Activated CD8-positive, alpha-beta T cell treated with anti-CD3 and anti-CD28 coated beads for 36 hours (primary cell): ENCODE measurements at regions of chr3 and their contacts with region 1.

Region 1: GRCh38 chr3:141370065-141370533 is 1.8 kb downstream of the ZBTB38 start:
- DNase-seq: peak; percentile 73
- ATAC-seq: peak; percentile 94
- H3K4me3 Mint-ChIP-seq: no peak overlapping the region
- H3K27ac Mint-ChIP-seq: peak overlapping the region; percentile 56
- H3K4me1 Mint-ChIP-seq: peaks cover 53% of the 10 kb centered on the region
- H3K27me3 Mint-ChIP-seq: no peaks in the 10 kb centered on the region
- CTCF ChIP-seq: peak; percentile 24

Region 2: GRCh38 chr3:141336672-141337522 is 33.2 kb before region 1 on chr3:
- CTCF ChIA-PET with region 1: no interaction called
- POLR2A ChIA-PET with region 1: no interaction called
- intact Hi-C with region 1: no loop called
- DNase-seq: no peak
- ATAC-seq: no peak
- H3K4me3 Mint-ChIP-seq: no peak overlapping the region
- H3K27ac Mint-ChIP-seq: no peak overlapping the region
- H3K4me1 Mint-ChIP-seq: no peaks in the 10 kb centered on the region
- H3K27me3 Mint-ChIP-seq: no peaks in the 10 kb centered on the region
- CTCF ChIP-seq: no peak

Region 3: DNA sequence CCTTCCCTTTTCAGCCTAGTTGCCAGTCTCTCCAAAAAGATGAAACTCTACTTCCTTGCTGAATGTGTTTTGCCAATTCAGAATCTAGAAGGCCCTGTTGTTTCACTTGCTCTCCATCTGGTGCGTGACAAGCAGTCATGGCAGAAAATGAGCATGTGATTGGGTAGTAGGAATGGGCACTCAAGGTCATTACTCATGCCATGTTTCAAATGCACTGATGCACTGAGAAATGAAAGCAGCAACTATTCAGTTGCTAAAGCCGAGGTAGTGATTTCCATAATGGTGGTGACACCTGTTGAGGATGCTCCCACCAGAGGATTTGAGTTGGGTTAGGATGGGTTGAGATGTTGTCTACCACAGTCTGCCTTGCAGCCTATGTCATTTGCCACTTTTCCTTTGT is 10.9 kb after region 1 on chr3:
- CTCF ChIA-PET with region 1: interaction called, 14 read pairs
- POLR2A ChIA-PET with region 1: interaction called, 3 read pairs
- intact Hi-C with region 1: no loop called
- DNase-seq: no peak
- ATAC-seq: no peak
- H3K4me3 Mint-ChIP-seq: no peak overlapping the region
- H3K27ac Mint-ChIP-seq: no peak overlapping the region
- H3K4me1 Mint-ChIP-seq: peaks cover 27% of the 10 kb centered on the region
- H3K27me3 Mint-ChIP-seq: no peaks in the 10 kb centered on the region
- CTCF ChIP-seq: no peak

Region 4: GRCh38 chr3:141402476-141403171 is 32.5 kb after region 1 on chr3:
- CTCF ChIA-PET with region 1: interaction called, 10 read pairs
- POLR2A ChIA-PET with region 1: interaction called, 3 read pairs
- intact Hi-C with region 1: no loop called
- DNase-seq: peak; percentile 59
- ATAC-seq: peak; percentile 68
- H3K4me3 Mint-ChIP-seq: peak overlapping the region; percentile 85
- H3K27ac Mint-ChIP-seq: peak overlapping the region; percentile 89
- H3K4me1 Mint-ChIP-seq: peaks cover 52% of the 10 kb centered on the region
- H3K27me3 Mint-ChIP-seq: no peaks in the 10 kb centered on the region
- CTCF ChIP-seq: no peak

Region 5: DNA sequence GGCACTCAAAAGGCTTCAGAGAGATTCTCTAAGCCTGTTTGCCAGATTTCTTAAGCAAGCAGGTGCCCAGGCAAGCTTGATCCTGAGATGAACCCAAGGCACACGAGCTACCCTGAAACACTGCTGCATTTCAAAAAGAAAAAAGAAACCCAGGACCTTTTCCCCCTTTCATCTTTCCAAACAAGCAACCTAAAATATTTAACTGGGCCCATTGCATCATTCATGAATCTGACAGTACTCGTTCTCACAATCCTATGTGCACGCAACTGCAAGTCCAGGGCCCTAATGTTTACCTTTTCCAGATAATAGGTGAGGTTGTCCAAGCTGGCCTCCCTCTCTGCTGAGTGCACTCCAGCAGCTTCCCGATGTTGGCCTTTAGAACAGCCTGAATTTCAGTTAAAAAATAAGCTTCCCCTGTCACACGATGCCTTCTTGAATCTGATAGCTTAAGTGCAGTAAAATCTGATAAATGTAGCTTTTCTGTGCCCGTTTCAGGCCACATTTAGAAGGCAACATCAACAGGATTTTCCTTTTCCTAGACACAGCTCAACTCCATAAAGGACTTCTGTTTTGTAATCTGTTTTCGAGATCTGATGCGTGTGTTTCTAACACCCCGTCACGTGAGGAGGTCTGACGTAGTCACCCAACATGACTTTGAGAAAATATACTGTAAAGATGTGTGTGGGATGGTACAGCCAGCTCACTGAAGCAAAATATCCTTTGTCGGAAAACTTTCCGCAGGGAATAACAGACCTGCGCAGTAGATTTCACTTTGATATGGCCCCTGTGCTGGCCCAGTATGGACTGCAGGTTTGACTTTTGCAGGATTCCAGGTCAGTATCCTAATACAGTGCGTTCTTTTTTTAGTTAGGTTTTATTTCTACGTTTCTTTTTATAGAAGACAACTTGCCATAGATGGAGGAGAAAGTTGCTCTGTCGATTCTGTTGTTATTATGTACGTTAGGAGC is 61.6 kb after region 1 on chr3:
- CTCF ChIA-PET with region 1: interaction called, 10 read pairs
- POLR2A ChIA-PET with region 1: interaction called, 3 read pairs
- intact Hi-C with region 1: no loop called
- DNase-seq: no peak
- ATAC-seq: no peak
- H3K4me3 Mint-ChIP-seq: no peak overlapping the region
- H3K27ac Mint-ChIP-seq: no peak overlapping the region
- H3K4me1 Mint-ChIP-seq: peaks cover 21% of the 10 kb centered on the region
- H3K27me3 Mint-ChIP-seq: no peaks in the 10 kb centered on the region
- CTCF ChIP-seq: no peak